ENCODE measurements at regions of chr14 and their contacts with region 1.

Region 1: GRCh38 chr14:36070031-36070719 is 106.3 kb downstream of the PTCSC3 start:
- DNase-seq: peak; percentile 56
- CTCF ChIP-seq: peak; percentile 65

Region 2: GRCh38 chr14:35835208-35835982 is 234.8 kb before region 1 on chr14:
- in situ Hi-C with region 1: no loop called
- DNase-seq: no peak
- CTCF ChIP-seq: no peak

Region 3: GRCh38 chr14:36373982-36374673 is 304.0 kb after region 1 on chr14:
- in situ Hi-C with region 1: loop called (anchors 10 kb)
- DNase-seq: peak; percentile 45
- CTCF ChIP-seq: peak; percentile 85

Measured in GM13976 (cell line).